ENCODE measurements at regions of chr13 and their contacts with region 1.

Region 1: DNA sequence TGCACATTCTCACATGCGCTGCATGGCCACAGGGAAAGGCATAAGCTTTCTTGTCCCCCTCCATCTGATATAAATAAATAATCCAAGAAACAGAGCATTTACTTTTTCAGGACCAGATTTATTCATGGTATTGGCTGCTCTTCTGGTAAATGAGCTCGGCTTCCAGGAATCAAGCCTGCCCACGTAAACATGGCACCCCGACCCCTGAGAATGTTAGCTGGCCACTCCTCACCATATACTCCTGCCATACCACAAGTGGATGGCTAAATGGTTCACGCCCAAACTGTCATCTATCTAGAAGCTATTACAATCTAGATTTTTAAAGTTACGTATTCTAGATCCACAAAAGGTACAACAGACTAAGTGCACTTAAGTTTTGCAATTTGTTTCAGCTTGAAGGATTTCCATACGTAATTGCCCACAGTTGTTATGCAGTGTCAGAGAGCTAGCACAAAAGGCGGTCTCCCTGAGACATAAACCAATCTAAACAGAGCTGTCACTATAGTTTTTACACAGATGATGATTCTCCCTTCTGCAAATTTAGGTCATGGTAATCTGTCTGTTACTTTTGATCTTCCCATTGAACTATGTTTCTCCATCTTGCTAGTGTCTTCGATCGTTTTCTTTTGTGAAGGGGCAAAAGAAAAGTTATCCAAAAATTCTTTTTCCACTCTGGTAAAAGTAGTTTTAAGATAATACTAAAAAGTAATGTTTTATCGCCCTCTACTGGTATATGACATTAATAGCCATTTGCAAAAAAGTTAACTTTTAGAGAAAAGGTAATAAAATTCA is 16.2 kb upstream of the FOXO1 start:
- DNase-seq: no peak
- H3K4me3 ChIP-seq: no peak overlapping the region
- H3K27me3 ChIP-seq: no peaks in the 10 kb centered on the region
- CTCF ChIP-seq: peak; percentile 39; the same call in 1 of the 2 replicates

Region 2: GRCh38 chr13:40251343-40252032 is 431.2 kb before region 1 on chr13:
- CTCF ChIA-PET with region 1: no interaction called
- POLR2A ChIA-PET with region 1: no interaction called
- DNase-seq: no peak
- H3K4me3 ChIP-seq: no peak overlapping the region
- H3K27me3 ChIP-seq: no peaks in the 10 kb centered on the region
- CTCF ChIP-seq: no peak

Region 3: DNA sequence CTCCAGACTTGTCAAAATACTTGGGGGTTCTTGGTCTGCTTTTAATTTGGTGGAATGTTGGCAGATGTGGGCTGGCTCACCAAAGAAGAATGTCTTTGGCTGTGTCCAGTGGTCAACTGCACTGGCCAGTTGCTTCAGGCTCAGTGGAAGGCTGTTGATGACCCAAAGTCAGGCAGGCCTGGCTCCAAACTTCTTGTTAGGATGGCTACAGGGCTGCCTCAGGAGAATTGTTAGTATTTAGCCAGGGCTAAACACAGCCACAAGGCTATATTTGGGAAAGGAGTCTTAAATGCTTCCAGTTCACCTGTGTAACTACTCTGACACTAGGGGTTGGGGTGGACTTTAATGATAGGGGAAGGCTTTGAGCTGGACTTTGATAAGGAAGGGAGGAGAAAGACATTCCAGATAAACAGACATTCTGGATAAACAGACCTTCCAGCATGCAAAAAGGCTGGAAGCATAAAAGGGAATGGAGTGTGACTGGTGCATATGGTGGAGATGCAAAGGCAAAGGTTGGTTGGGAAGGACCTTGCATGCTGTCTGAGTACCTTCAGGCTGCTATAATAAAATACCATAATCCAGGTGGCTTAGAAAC is 133.0 kb before region 1 on chr13:
- CTCF ChIA-PET with region 1: no interaction called
- POLR2A ChIA-PET with region 1: no interaction called
- DNase-seq: peak; percentile 48
- H3K4me3 ChIP-seq: no peak overlapping the region
- H3K27me3 ChIP-seq: no peaks in the 10 kb centered on the region
- CTCF ChIP-seq: no peak

Region 4: DNA sequence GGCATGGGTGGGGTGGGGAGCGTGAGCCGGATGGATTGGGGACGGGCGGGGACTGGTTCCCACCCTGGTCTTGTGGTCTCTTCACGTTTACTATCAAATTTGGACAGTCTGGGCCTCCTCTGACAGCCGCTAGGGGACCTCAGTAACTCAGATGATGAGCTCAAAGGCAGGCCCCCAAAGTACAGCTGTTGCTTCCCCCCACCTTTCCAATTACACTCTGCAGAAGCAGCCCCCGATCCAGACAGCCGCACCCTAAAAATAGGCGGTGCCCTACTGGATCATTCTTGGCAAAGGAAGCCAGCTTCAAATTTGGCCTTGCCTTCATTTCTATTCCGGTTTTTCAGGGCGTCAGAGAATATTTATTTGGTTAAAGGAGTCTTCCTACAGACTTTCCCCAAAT is 14.3 kb before region 1 on chr13:
- CTCF ChIA-PET with region 1: interaction called, 13 read pairs
- POLR2A ChIA-PET with region 1: no interaction called
- DNase-seq: no peak
- H3K4me3 ChIP-seq: no peak overlapping the region
- H3K27me3 ChIP-seq: no peaks in the 10 kb centered on the region
- CTCF ChIP-seq: peak; percentile 51; the same call in 1 of the 2 replicates